HCT116 (cell line): ENCODE measurements at regions of chr2 and their contacts with region 1.

Region 1: DNA sequence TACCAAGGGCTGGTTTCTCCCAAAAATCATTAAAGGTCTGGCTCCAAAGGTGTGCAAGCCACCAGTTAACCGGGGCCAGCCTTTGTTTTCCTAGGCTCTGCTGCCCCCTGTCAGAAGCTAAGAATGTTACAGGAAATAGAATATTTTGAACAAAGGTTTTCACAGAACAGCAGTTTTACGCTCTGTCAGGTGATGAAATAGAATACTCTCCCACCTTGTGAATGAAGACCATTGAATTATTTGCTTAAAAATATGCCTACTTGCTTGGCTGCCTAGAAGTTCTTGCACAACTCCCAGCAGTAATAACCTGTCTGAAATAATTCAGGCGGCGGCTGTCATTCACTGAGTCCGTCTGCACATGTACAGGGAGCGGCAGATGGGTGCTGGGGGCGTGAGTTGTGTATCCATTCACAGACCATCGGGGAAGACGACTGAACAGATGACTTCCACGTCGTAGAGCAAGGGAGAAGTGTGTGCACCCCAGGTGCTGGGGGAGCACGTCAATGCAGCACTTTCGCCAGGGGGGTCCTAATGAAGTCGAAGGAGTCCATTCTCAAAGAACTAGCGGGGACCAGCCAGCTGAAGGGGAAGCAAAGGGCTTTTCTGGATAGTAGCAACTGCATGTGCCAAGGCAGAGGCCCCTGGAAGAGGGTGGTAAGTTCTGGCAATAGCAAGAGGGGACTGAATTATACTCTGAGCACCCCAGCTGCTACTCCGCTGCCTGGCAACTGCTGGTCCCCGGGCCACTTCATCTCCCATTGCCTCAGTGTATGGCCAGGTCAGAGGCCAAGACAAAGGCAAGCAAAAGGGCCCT is 56.1 kb downstream of the SF3B1 start:
- DNase-seq: peak; percentile 37
- ATAC-seq: peak; percentile 86
- H3K4me3 ChIP-seq: no peak overlapping the region
- H3K27ac ChIP-seq: no peak overlapping the region
- H3K4me1 ChIP-seq: no peaks in the 10 kb centered on the region
- H3K27me3 ChIP-seq: no peaks in the 10 kb centered on the region
- CTCF ChIP-seq: peak; percentile 64 to 93 (median 78)
- POLR2A ChIP-seq: no peak
- RAD21 ChIP-seq: peak; percentile 96

Region 2: GRCh38 chr2:196750982-196751635 is 627.6 kb before region 1 on chr2:
- CTCF ChIA-PET with region 1: no interaction called
- POLR2A ChIA-PET with region 1: no interaction called
- RAD21 ChIA-PET with region 1: no interaction called
- intact Hi-C with region 1: loop called (anchors 10 kb)
- DNase-seq: peak; percentile 51
- ATAC-seq: peak; percentile 98
- H3K4me3 ChIP-seq: no peak overlapping the region
- H3K27ac ChIP-seq: no peak overlapping the region
- H3K4me1 ChIP-seq: no peaks in the 10 kb centered on the region
- H3K27me3 ChIP-seq: no peaks in the 10 kb centered on the region
- CTCF ChIP-seq: peak; percentile 76 to 90 (median 90); a peak in 5 of 6 replicates
- POLR2A ChIP-seq: no peak
- RAD21 ChIP-seq: peak; percentile 59

Region 3: DNA sequence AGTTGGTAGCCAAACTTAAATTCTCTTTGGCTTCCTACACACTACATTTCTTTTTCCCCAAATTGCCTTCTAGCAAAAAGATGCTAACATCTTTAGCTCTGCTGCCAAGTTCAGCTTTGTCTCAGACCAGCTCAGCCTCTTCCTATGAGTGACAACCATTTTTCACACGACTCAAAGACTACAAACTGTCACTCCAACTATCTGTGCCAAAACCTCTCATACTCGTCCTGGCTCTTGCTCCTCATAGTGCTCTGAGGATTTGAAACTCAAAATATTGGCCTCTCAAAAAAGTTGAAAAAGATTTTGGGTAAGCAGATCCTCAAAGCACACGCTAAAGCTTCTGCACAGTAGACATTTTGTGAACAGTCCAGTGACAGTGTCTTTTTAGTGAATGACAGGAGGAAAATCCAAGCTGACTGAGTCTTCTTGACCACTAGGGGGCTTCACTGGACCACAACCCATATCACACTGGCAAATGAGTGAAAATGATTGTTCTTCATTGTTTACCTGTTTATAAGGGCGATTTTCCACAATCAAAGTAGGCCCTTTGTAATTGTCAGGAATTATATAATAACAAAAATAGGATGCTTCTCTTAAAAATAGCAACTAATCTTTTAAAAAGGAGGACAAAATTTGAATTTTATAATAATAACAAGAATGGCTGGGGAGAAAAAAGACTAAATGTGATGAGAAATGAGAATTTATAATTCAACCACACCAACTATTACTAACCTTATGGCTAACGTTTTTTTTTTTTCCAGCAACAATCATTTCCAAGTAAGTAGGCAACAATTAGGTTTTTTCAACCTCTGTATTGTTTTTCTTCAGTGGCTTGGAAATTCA is 366.7 kb before region 1 on chr2:
- CTCF ChIA-PET with region 1: interaction called, 4 read pairs
- POLR2A ChIA-PET with region 1: no interaction called
- RAD21 ChIA-PET with region 1: no interaction called
- intact Hi-C with region 1: loop called (anchors 2 kb)
- DNase-seq: peak; percentile 42
- ATAC-seq: peak; percentile 95
- H3K4me3 ChIP-seq: no peak overlapping the region
- H3K27ac ChIP-seq: no peak overlapping the region
- H3K4me1 ChIP-seq: no peaks in the 10 kb centered on the region
- H3K27me3 ChIP-seq: no peaks in the 10 kb centered on the region
- CTCF ChIP-seq: peak; percentile 67 to 93 (median 85); a peak in 5 of 6 replicates
- POLR2A ChIP-seq: no peak
- RAD21 ChIP-seq: peak; percentile 79

Region 4: DNA sequence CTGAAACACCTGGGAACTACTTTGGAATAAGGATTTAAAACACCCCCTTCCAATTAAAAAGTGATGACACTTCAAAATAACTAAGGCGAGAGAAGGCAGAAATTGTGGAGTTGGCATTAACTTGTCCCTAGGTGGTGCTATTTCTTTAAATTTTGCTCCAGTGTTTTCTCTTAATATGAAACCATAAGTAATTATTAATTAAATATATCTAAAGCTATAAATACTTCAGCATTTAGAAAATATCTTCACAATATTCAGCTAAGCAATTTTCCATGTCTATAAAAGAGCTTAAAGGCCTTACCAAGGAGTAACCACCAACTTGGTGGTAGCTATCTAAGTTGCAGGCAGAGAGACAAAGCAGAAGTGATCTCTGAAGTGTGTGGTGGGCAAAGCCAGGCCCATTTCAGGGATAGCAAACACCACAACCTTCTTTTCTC is 265.4 kb before region 1 on chr2:
- CTCF ChIA-PET with region 1: interaction called, 11 read pairs
- POLR2A ChIA-PET with region 1: no interaction called
- RAD21 ChIA-PET with region 1: interaction called in 1 of 2 experiments, 3 read pairs
- intact Hi-C with region 1: loop called (anchors 1 kb)
- DNase-seq: peak; percentile 18
- ATAC-seq: peak; percentile 54; the same call in 1 of the 2 replicates
- H3K4me3 ChIP-seq: no peak overlapping the region
- H3K27ac ChIP-seq: no peak overlapping the region
- H3K4me1 ChIP-seq: no peaks in the 10 kb centered on the region
- H3K27me3 ChIP-seq: no peaks in the 10 kb centered on the region
- CTCF ChIP-seq: peak; percentile 45 to 72 (median 48)
- POLR2A ChIP-seq: no peak
- RAD21 ChIP-seq: peak; percentile 71

Region 5: DNA sequence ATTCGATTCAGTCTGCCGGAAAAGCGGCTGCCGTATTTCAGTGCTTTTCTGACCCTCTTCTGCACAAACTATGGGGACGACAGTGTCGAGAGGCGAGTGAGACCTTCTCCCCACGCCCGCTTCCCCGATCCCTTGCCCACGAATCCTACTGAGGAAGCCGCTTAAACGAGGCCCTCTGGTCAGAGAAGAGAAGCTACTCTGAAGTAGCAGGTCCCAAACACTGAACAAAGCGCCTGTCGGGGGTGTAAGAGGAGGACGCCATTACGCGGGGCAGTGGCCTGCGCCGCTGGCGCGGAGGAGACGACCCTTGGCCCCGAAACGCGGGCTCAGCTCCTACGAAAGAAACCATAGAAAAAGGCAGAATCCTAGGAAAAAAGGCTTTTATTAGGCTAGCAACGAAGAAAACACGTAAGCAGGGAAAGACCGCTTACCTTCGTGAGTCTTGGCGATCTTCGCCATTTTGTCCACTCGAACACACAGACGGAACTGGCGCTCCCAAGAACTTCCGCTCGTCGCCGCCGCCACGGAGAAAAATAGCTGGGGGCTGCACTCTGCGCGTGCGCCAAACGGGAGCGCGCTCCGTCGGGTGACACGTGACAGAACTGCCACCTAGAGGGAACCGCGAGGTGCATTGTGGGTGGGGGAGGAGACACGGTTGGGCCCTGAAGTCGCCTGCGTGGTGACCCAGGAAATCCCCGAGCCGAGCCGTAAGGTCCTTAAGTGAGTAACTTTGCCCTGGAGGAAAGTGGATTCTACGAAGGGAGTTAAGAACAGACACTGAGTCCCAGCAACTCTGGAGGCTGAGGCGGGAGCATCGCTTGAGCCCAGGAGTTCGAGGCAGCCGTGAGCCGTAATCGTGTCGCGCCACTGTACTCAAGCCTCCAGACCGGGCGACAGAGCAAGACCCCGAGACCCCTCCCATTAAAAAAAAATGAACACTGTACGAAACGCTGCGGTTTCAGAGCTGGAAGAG is 56.1 kb after region 1 on chr2 and contains the start of gene SF3B1:
- CTCF ChIA-PET with region 1: no interaction called
- POLR2A ChIA-PET with region 1: no interaction called
- RAD21 ChIA-PET with region 1: no interaction called
- intact Hi-C with region 1: no loop called
- DNase-seq: peak; percentile 95
- ATAC-seq: peak; percentile 93
- H3K4me3 ChIP-seq: peak within 1 kb of the TSS; percentile 84 to 100
- H3K27ac ChIP-seq: peak within 1 kb of the TSS; percentile 78
- H3K4me1 ChIP-seq: peaks cover 6 to 22% of the 10 kb centered on the region in 2 experiments; a peak in 2 of 4 replicates
- H3K27me3 ChIP-seq: no peaks in the 10 kb centered on the region
- CTCF ChIP-seq: no peak
- POLR2A ChIP-seq: peak; percentile 92
- RAD21 ChIP-seq: no peak
- total RNA-seq, gene SF3B1: 282 TPM

Region 6: DNA sequence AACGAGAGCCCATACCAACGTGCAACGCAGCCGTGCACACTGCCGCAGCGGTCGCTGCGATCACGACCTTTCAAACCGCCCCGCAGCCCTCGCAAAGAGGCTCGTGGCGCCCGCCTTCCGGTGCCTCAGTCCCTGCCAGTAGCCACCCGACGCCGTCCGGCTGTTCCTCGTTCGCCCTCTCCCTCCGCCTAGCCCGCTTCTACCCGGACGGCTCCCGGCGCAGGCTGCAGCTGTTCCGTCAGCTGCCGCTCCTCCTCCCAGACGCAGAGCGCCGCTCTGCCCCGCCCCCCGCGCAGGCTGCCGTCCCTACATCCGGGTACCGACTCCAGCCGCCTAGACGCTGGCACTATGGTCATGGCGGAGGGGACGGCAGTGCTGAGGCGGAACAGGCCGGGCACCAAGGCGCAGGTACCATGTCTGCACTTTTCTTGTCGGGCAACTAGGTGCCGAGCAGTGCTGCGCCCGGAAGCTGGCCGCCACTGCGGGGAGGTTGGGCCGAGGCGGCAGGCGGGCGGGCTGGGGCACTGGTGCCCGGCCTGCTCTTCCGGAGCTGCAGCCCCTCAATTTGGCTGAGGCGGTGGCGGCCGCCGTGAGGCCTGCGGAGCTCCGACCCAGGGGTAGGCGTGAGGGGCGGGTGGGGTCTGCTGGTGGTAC is 137.2 kb after region 1 on chr2 and contains the start of gene MOB4:
- CTCF ChIA-PET with region 1: no interaction called
- POLR2A ChIA-PET with region 1: no interaction called
- RAD21 ChIA-PET with region 1: no interaction called
- intact Hi-C with region 1: no loop called
- DNase-seq: peak; percentile 86
- ATAC-seq: peak; percentile 94
- H3K4me3 ChIP-seq: peak within 1 kb of the TSS; percentile 77 to 93
- H3K27ac ChIP-seq: peak within 1 kb of the TSS; percentile 74
- H3K4me1 ChIP-seq: peaks cover 10 to 17% of the 10 kb centered on the region in 2 experiments; a peak in 3 of 4 replicates
- H3K27me3 ChIP-seq: no peaks in the 10 kb centered on the region
- CTCF ChIP-seq: no peak
- POLR2A ChIP-seq: peak; percentile 97
- RAD21 ChIP-seq: no peak
- total RNA-seq, gene MOB4: 24.4 TPM

Region 7: DNA sequence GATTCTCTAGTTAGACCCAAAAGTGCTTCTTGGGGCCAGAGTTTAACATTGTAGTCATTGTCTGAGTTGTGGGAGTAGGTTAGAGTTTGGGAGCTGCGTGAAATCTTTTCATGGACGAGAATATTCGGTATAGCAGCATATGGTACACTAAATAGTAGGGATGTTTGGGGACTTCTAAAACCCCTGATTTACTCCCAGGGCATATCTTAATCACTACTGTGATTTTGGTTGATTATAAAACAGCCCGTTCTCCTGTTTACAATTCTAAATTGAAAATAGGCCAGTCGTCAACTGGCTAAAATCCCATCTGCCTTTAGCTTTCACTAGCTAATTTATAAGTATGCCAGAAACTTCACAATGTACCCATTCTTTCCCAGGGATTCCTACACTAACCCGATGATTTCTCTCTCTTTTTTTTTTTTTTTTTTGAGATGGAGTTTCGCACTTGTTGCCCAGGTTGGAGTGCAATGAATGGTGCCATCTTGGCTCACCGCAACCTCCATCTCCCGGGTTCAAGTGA is 181.5 kb after region 1 on chr2:
- CTCF ChIA-PET with region 1: no interaction called
- POLR2A ChIA-PET with region 1: no interaction called
- RAD21 ChIA-PET with region 1: no interaction called
- intact Hi-C with region 1: no loop called
- DNase-seq: no peak
- ATAC-seq: no peak
- H3K4me3 ChIP-seq: no peak overlapping the region
- H3K27ac ChIP-seq: no peak overlapping the region
- H3K4me1 ChIP-seq: no peaks in the 10 kb centered on the region
- H3K27me3 ChIP-seq: no peaks in the 10 kb centered on the region
- CTCF ChIP-seq: no peak
- POLR2A ChIP-seq: no peak
- RAD21 ChIP-seq: no peak